Activated CD4-positive, alpha-beta T cell treated with anti-CD3 and anti-CD28 coated beads, Interleukin-2, amount 10 ng/mL, durations not matched to agents 24 days and 14 days (primary cell): ENCODE measurements at regions of chr17 and their contacts with region 1.

Region 1: GRCh38 chr17:58317421-58318064 is 11.1 kb downstream of the TSPOAP1 start:
- DNase-seq: peak; percentile 90
- H3K4me3 Mint-ChIP-seq: peak overlapping the region; percentile 18
- H3K27ac Mint-ChIP-seq: peak overlapping the region; percentile 85
- H3K4me1 Mint-ChIP-seq: peaks cover 13% of the 10 kb centered on the region
- H3K27me3 Mint-ChIP-seq: no peaks in the 10 kb centered on the region

Region 2: DNA sequence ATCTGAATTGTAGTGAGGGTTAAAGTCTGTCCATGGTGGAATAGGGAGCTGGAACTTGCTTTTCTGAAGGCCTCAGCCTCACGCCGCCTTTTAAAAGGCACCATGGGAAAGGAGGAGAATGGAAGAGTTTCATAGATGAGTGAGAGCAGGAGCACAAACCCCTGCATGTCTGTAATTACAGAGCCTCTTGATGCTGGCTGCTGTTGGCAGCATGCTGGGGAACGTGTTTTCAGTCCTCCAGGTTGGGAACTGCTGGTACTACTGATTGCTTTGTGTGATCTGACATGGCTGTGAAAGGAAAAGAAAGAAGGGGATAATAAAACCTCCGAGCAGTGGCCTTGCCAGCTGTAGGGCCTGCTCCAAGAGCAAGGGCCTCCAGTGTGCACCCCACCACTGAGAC is 251.1 kb before region 1 on chr17:
- intact Hi-C with region 1: no loop called
- DNase-seq: no peak
- H3K4me3 Mint-ChIP-seq: no peak overlapping the region
- H3K27ac Mint-ChIP-seq: no peak overlapping the region
- H3K4me1 Mint-ChIP-seq: no peaks in the 10 kb centered on the region
- H3K27me3 Mint-ChIP-seq: peaks cover 24% of the 10 kb centered on the region

Region 3: DNA sequence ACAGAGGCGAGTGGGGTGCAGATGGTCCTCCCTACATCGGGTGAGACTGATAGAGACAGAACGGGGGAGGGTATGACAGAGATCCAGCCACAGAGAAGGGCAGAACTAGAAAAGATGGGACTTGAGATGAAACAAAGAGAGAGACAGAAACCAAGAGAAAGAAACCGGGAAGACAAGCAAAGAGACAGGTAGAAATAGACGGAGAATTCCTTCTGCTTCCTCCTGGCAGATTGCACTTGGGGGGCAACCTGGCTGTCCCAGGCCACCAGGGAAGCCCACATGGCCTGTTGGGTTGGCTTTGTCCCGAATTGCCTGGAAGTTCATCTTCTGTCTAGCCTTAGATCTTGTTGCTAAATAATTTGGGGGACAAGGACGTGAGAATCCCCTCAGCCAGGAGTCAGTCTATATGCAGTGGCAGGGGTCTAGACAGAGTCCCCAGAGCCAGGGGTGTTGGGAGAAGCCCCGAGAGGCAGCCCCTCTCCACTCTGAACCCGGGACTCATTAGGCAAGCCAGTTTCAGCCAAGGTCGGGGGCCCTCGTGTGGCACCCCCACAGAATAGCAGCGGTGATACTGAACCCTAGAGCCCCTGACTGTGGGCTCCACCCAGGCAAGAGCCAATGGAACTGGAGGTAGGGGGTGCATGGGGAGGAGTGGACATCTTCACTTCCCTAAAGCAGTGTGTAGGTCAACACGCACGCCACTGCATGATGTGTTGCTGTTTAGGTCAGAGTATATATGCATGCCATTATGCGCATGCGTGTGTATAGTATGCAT is 11.7 kb after region 1 on chr17:
- intact Hi-C with region 1: loop called (anchors 1 kb)
- DNase-seq: peak; percentile 95
- H3K4me3 Mint-ChIP-seq: peak overlapping the region; percentile 91
- H3K27ac Mint-ChIP-seq: peak overlapping the region; percentile 96
- H3K4me1 Mint-ChIP-seq: peaks cover 45% of the 10 kb centered on the region
- H3K27me3 Mint-ChIP-seq: peaks cover 4% of the 10 kb centered on the region